ENCODE measurements at regions of chr5 and their contacts with region 1.

Region 1: DNA sequence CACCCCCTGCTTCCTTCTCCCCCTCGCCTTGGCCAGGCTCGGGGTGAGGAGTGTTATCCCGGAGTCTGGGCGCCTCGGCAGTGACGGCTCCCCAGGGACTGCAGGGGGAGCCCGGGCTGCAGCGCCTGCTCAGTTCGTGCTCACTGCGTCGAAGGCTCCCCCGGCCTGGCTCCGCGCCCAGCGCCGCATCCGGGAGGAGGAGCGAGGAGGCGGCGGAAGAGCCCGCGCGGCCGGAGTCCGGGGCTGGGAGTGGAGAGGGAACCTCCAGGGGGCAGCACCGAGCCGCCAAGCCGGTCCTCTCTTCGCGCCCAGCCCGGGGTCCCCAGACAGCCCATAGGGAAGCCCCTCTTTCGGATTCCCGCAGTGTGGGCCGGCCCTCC is 1.3 kb upstream of the EGR1 start:
- DNase-seq: peak; percentile 87 to 98 (median 91)
- ATAC-seq: peak; percentile 60 to 65 (median 62)
- H3K4me3 ChIP-seq: peak overlapping the region; percentile 88 to 96
- H3K4me3 Mint-ChIP-seq: peak overlapping the region; percentile 82 to 88 (median 83)
- H3K27ac ChIP-seq: peak overlapping the region; percentile 99
- H3K27ac Mint-ChIP-seq: peak overlapping the region; percentile 88 to 90
- H3K4me1 ChIP-seq: peaks cover 27 to 62% of the 10 kb centered on the region in 2 experiments
- H3K4me1 Mint-ChIP-seq: peaks cover 47 to 53% (median 49%) of the 10 kb centered on the region in 3 donors
- H3K27me3 ChIP-seq: peaks cover 0 to 6% of the 10 kb centered on the region in 2 experiments
- H3K27me3 Mint-ChIP-seq: no peaks in the 10 kb centered on the region

Region 2: GRCh38 chr5:137730336-137730735 is 733.7 kb before region 1 on chr5:
- CTCF ChIA-PET with region 1: no interaction called
- POLR2A ChIA-PET with region 1: interaction called in 1 of 2 experiments, 10 read pairs
- DNase-seq: no peak
- ATAC-seq: no peak
- H3K4me3 ChIP-seq: no peak overlapping the region
- H3K4me3 Mint-ChIP-seq: no peak overlapping the region
- H3K27ac ChIP-seq: no peak overlapping the region
- H3K27ac Mint-ChIP-seq: no peak overlapping the region
- H3K4me1 ChIP-seq: peaks cover 17 to 26% of the 10 kb centered on the region in 2 experiments
- H3K4me1 Mint-ChIP-seq: peaks cover 9 to 21% (median 11%) of the 10 kb centered on the region in 3 donors
- H3K27me3 ChIP-seq: no peaks in the 10 kb centered on the region
- H3K27me3 Mint-ChIP-seq: no peaks in the 10 kb centered on the region

Region 3: DNA sequence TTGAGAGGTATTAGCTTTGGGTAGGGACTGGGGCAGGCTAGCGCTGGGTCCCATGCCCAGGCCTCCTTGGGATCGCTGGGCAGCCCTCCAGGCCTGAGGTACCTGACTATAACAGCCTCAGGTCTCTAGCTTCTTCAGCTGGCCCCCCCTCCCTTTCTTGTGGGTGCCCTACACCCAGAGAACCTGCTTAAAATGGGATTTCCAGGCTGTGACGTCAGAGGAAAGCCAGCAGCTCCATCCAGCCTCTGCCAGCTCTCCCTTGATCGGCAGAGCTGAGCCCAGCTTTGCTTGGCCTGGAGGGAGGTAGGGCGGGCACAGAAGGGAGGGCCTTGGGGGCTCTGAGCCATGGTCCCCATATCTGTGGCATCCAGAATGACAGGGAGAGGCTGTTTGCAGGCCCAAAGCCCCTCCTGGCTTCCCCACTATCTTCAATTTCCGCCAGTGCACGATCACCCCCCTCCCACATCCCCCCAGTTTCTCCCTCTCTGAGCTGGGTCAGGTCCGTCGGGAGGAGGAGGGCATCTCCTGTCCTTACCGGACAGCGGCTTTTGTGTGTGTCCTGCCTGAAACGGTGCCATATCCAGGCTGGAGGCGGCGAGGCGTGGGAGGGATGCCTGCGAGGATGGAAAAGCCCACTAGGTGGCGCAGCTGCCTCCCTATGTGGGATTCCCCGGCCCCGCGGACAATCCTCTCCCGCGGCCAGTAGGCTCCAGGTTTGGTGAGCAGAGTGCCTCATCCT is 14.3 kb before region 1 on chr5:
- CTCF ChIA-PET with region 1: interaction called, 8 to 11 read pairs
- POLR2A ChIA-PET with region 1: interaction called in 1 of 2 experiments, 6 read pairs
- DNase-seq: peak; percentile 15 to 86 (median 62)
- ATAC-seq: peak; percentile 76 to 93 (median 86)
- H3K4me3 ChIP-seq: no peak overlapping the region
- H3K4me3 Mint-ChIP-seq: no peak overlapping the region
- H3K27ac ChIP-seq: no peak overlapping the region
- H3K27ac Mint-ChIP-seq: peak overlapping the region in 1 of 2 donors; percentile 52
- H3K4me1 ChIP-seq: peaks cover 3 to 12% of the 10 kb centered on the region in 2 experiments
- H3K4me1 Mint-ChIP-seq: peaks cover 5 to 8% (median 5%) of the 10 kb centered on the region in 3 donors
- H3K27me3 ChIP-seq: peaks cover 0 to 29% of the 10 kb centered on the region in 2 experiments
- H3K27me3 Mint-ChIP-seq: no peaks in the 10 kb centered on the region

Region 4: DNA sequence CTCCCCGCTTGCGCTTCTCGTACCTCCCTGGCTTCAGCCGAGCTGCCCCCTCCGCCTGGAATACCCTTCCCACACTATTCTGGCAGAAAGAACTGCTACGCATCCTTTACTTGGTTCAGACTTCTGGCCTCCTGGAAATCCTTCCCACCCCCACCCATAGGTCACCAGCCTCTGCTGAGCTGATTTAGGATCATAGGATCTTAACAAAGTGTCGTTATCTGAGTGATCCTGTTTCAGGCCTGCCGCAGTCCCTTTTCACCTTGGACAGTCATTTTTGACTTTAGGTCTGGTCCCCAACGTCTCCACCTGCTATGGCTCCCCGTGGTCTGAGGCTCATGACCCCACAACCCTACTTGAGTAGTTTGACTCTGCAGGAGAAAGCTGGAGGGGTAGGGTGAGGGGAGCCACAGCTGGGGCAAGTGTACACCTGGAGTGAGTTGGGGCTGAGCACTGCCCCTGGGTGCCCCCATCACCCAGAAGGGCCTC is 28.6 kb after region 1 on chr5:
- CTCF ChIA-PET with region 1: interaction called, 4 to 9 read pairs
- POLR2A ChIA-PET with region 1: interaction called in 1 of 2 experiments, 11 read pairs
- DNase-seq: peak in 1 of 35 experiments; percentile 13
- ATAC-seq: no peak
- H3K4me3 ChIP-seq: peak overlapping the region; percentile 52 to 53
- H3K4me3 Mint-ChIP-seq: peak overlapping the region; percentile 85 to 86 (median 86)
- H3K27ac ChIP-seq: no peak overlapping the region
- H3K27ac Mint-ChIP-seq: no peak overlapping the region
- H3K4me1 ChIP-seq: peaks cover 6 to 22% of the 10 kb centered on the region in 2 experiments
- H3K4me1 Mint-ChIP-seq: peaks cover 9 to 19% (median 16%) of the 10 kb centered on the region in 3 donors
- H3K27me3 ChIP-seq: peaks cover 0 to 47% of the 10 kb centered on the region in 2 experiments
- H3K27me3 Mint-ChIP-seq: peaks cover 5 to 20% of the 10 kb centered on the region in 2 donors

Region 5: GRCh38 chr5:138503487-138504270 is 39.7 kb after region 1 on chr5:
- CTCF ChIA-PET with region 1: interaction called, 3 to 19 read pairs
- POLR2A ChIA-PET with region 1: interaction called in 1 of 2 experiments, 8 read pairs
- DNase-seq: peak in 15 of 35 experiments; percentile 12 to 78 (median 22)
- ATAC-seq: peak; percentile 51 to 74 (median 68)
- H3K4me3 ChIP-seq: no peak overlapping the region
- H3K4me3 Mint-ChIP-seq: no peak overlapping the region
- H3K27ac ChIP-seq: no peak overlapping the region
- H3K27ac Mint-ChIP-seq: peak overlapping the region in 1 of 2 donors; percentile 18
- H3K4me1 ChIP-seq: no peaks in the 10 kb centered on the region
- H3K4me1 Mint-ChIP-seq: peaks cover 0 to 2% (median 0%) of the 10 kb centered on the region in 3 donors
- H3K27me3 ChIP-seq: no peaks in the 10 kb centered on the region
- H3K27me3 Mint-ChIP-seq: no peaks in the 10 kb centered on the region

Region 6: DNA sequence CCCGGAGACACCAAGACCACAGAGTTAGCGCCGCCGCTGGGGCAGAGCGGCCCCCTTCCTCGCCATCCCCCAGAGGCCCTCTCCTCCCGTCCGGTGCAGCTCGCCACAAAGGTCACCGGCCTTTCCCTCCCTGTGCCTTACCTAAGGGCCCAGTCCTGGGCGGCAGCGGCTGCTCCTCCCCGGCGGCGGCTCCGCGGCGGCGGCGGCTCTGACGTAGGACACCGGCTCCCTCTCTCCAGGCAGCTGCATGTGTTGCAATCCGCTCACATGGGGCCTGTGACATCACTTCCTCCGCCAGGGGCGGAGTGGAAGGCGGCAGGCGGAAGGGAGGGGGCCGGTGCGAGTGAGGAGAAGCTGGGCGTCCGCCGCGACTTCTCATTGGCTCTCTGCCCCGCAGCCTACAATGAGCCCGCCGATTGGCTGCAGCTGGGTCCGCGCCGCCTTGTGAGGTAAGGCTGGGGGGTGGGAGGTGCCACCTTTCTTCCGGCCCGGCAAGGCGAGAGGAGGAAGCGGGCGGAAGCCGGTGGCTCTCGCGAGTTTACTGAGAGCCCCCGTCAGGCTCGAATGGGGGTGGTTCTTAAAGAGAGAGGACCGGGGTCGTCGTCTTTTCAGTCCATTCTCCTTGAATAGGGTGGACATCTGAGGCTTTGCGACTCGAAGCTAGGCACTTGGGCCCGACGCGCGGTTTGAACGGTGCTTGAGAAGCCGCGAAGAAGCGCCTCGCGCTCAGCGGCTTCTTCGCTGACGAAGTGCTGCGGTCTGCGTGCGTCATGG is 79.1 kb after region 1 on chr5 and contains the start of gene ETF1:
- CTCF ChIA-PET with region 1: interaction called in 1 of 2 experiments, 3 read pairs
- POLR2A ChIA-PET with region 1: interaction called, 3 to 12 read pairs
- DNase-seq: peak; percentile 96 to 100 (median 100)
- ATAC-seq: peak; percentile 89 to 94 (median 90)
- H3K4me3 ChIP-seq: peak within 1 kb of the TSS; percentile 97 to 99
- H3K4me3 Mint-ChIP-seq: peak within 1 kb of the TSS; percentile 94 to 100 (median 100)
- H3K27ac ChIP-seq: peak within 1 kb of the TSS; percentile 100
- H3K27ac Mint-ChIP-seq: peak within 1 kb of the TSS; percentile 100
- H3K4me1 ChIP-seq: peaks cover 39 to 47% of the 10 kb centered on the region in 2 experiments
- H3K4me1 Mint-ChIP-seq: peaks cover 77 to 85% (median 78%) of the 10 kb centered on the region in 3 donors
- H3K27me3 ChIP-seq: no peaks in the 10 kb centered on the region
- H3K27me3 Mint-ChIP-seq: no peaks in the 10 kb centered on the region
- total RNA-seq, gene ETF1: 40.1 to 115 (median 43.2) TPM

Region 7: DNA sequence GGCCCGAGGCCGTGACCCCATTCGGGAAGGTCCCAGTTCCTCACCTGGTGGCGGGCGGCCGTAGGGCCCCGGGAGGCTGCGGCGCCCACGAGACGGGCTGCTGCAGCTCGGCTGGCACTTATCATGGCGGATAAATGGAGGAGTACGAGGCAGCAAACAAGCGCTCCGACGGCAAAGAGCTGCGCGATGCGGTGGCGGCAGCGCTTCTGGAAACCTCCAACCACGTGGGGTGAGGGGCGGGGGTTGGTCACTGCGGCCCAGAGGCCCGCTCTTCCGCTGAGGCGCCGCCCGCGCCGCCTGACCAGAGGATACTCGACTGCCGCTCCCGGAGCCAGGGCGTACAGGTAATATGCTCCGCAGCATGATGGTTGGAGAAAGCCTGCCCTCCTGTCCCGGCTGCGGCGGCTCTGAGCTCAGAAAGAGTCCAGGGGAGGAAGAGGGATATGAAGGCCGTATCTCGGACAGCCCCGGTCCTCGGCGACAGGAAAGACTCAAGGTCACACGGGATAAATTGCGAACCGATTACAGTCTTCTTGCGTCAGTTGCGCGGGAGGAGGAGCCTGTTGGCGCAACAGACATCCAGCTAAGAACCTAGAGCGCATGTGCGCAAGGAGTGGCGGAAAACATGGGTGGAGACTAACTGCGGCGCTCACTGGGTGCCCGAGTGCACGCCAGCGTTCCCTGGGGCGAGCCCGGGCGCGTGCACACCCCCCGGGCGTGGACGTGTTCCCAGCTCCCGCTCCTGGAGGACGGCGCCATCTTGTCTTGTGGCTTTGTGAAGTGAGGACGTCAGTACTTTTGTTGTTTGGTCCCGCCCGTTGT is 111.4 kb after region 1 on chr5 and contains the start of gene HSPA9:
- CTCF ChIA-PET with region 1: interaction called in 1 of 2 experiments, 3 read pairs
- POLR2A ChIA-PET with region 1: interaction called, 4 to 11 read pairs
- DNase-seq: peak; percentile 94 to 100 (median 97)
- ATAC-seq: peak; percentile 85 to 88 (median 86)
- H3K4me3 ChIP-seq: peak within 1 kb of the TSS; percentile 95 to 99
- H3K4me3 Mint-ChIP-seq: peak within 1 kb of the TSS; percentile 96
- H3K27ac ChIP-seq: peak within 1 kb of the TSS; percentile 94
- H3K27ac Mint-ChIP-seq: peak within 1 kb of the TSS; percentile 100
- H3K4me1 ChIP-seq: peaks cover 8 to 26% of the 10 kb centered on the region in 2 experiments
- H3K4me1 Mint-ChIP-seq: peaks cover 29 to 43% (median 35%) of the 10 kb centered on the region in 3 donors
- H3K27me3 ChIP-seq: no peaks in the 10 kb centered on the region
- H3K27me3 Mint-ChIP-seq: no peaks in the 10 kb centered on the region
- total RNA-seq, gene HSPA9: 148 to 299 (median 162) TPM

Region 8: DNA sequence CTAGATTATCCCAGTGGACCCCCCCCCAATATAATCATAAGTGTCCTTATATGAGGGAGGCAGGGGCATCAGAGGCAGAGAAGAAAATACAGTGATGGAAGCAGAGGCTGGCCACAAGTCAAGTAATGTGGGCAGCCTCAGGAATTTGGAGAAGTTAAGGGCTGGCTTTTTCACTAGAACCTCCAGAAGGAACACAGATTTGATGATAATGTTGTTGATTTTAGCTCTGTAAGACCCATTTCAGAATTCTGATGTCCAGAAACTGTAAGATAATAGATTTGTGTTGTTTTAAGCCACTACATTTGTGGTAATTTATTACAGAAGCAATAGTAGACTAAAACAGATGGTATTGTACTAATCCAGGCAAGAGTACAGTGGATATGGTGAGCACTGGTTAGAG is 447.4 kb after region 1 on chr5:
- CTCF ChIA-PET with region 1: no interaction called
- POLR2A ChIA-PET with region 1: no interaction called
- DNase-seq: no peak
- ATAC-seq: no peak
- H3K4me3 ChIP-seq: no peak overlapping the region
- H3K4me3 Mint-ChIP-seq: no peak overlapping the region
- H3K27ac ChIP-seq: no peak overlapping the region
- H3K27ac Mint-ChIP-seq: no peak overlapping the region
- H3K4me1 ChIP-seq: no peaks in the 10 kb centered on the region
- H3K4me1 Mint-ChIP-seq: no peaks in the 10 kb centered on the region
- H3K27me3 ChIP-seq: no peaks in the 10 kb centered on the region
- H3K27me3 Mint-ChIP-seq: no peaks in the 10 kb centered on the region

Region 9: DNA sequence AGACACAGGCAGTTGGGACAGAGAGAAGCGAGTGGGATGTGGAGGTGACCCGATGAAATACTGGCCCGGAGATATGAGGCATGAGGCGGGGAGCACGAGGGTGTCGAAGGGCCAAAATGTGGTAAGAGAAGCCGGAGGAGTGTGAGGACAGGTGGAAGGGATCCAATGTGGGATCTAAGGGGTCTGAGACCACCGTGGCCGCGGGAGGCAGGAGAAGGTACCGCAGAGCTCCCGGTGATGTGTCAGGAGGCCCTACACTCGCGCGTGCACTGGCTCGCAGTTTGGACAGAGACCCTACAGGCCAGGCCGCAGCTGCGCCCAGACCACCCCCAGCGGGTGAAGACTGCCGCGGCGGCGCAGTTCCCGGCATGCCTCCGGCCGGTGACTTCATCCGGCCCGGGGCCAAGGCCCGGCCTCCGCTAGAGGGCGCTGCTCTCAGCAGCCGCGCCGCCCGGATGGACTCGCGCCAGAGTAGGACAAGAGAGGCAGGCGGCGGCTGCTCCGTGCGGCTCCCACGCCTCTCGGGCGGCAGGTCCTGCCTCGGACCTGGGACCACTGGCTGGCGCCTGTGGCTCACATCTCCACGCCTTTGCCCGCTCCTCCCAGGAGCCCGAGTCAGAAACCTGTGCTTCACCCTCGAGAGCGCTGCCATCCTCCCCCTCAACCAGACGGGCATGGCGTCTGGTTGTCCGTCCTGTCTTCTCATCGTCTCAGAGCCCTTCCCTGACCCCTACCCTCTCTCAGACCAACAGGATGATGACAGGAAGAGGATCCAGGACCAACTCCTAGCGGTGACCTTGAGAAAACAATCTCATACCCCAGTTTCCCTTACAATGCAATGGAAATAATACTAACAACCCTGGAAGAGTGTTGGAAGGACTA is 1053.9 kb after region 1 on chr5:
- CTCF ChIA-PET with region 1: no interaction called
- POLR2A ChIA-PET with region 1: no interaction called
- DNase-seq: peak; percentile 69 to 93 (median 84)
- ATAC-seq: peak; percentile 93 to 96 (median 94)
- H3K4me3 ChIP-seq: peak overlapping the region; percentile 61 to 66
- H3K4me3 Mint-ChIP-seq: peak overlapping the region; percentile 75 to 88 (median 83)
- H3K27ac ChIP-seq: peak overlapping the region; percentile 83
- H3K27ac Mint-ChIP-seq: peak overlapping the region; percentile 87 to 88
- H3K4me1 ChIP-seq: peaks cover 2 to 21% of the 10 kb centered on the region in 2 experiments
- H3K4me1 Mint-ChIP-seq: peaks cover 18 to 25% (median 24%) of the 10 kb centered on the region in 3 donors
- H3K27me3 ChIP-seq: peaks cover 0 to 5% of the 10 kb centered on the region in 2 experiments
- H3K27me3 Mint-ChIP-seq: no peaks in the 10 kb centered on the region